ENCODE measurements at regions of chr15 and their contacts with region 1.

Region 1: DNA sequence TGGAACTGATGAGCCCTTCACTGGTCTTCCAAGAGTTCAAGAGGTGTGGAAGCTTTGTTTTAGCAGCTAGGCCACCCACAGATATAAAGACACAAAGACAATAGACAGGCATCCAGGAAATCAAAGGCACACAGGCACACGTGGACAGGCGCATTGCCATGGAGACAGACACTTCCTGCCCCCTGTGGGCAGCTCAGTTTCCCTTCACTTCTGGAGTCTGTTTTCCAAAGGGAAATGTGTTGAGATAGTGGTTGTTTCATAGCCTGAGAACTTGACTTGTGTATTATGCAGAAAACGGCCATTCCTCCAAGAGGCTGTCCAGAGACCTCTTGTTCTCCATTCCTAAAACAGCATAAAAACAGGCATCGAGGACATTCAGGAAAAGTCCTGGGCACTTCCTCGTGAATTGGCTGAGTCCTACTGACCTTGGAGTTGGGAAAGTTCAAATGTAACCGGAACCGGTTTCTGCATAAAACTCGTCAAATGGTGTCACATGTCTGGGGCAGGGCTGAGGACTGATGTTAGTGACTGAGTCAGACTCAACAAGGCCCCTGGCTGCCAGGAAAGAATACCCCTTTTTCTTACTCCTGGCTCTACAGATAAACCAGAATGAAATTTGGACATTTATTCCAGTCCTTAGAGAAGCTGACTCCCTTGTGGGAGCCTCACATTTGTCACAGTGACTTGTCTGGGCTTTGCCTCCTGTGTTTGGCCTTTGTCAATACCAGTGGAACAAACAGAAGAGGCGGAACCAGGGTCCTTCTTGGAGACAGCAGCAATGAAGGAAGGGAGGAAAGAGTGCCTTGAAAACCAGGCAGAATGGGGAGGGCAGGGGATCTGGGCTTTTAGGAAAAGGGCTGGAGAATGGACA is 1.3 kb downstream of the ALPK3 start:
- DNase-seq: peak; percentile 70 to 85
- H3K4me3 ChIP-seq: peak overlapping the region; percentile 58 to 64
- H3K27ac ChIP-seq: peak overlapping the region; percentile 99
- H3K4me1 ChIP-seq: peaks cover 0 to 81% (median 56%) of the 10 kb centered on the region in 4 donors
- H3K27me3 ChIP-seq: no peaks in the 10 kb centered on the region
- CTCF ChIP-seq: no peak

Region 2: GRCh38 chr15:84588053-84588874 is 230.2 kb before region 1 on chr15:
- intact Hi-C with region 1: loop called (anchors 10 kb)
- DNase-seq: peak; percentile 84 to 87
- H3K4me3 ChIP-seq: peak overlapping the region; percentile 36 to 39
- H3K27ac ChIP-seq: no peak overlapping the region
- H3K4me1 ChIP-seq: peaks cover 0 to 9% (median 7%) of the 10 kb centered on the region in 4 donors
- H3K27me3 ChIP-seq: no peaks in the 10 kb centered on the region
- CTCF ChIP-seq: peak; percentile 62 to 96

Region 3: GRCh38 chr15:84600851-84601838 is 217.4 kb before region 1 on chr15 and contains the start of gene ZSCAN2:
- intact Hi-C with region 1: loop called (anchors 5 kb)
- DNase-seq: peak; percentile 96 to 97
- H3K4me3 ChIP-seq: peak within 1 kb of the TSS; percentile 88 to 96
- H3K27ac ChIP-seq: peak within 1 kb of the TSS; percentile 67 to 68
- H3K4me1 ChIP-seq: peaks cover 0 to 16% (median 5%) of the 10 kb centered on the region in 4 donors
- H3K27me3 ChIP-seq: no peaks in the 10 kb centered on the region
- CTCF ChIP-seq: no peak

Region 4: GRCh38 chr15:84783496-84784251 is 34.8 kb before region 1 on chr15:
- intact Hi-C with region 1: no loop called
- DNase-seq: no peak
- H3K4me3 ChIP-seq: no peak overlapping the region
- H3K27ac ChIP-seq: no peak overlapping the region
- H3K4me1 ChIP-seq: peaks cover 0 to 45% (median 23%) of the 10 kb centered on the region in 4 donors
- H3K27me3 ChIP-seq: no peaks in the 10 kb centered on the region
- CTCF ChIP-seq: no peak

Region 5: GRCh38 chr15:85063126-85064079 is 244.9 kb after region 1 on chr15:
- intact Hi-C with region 1: no loop called
- DNase-seq: no peak
- H3K4me3 ChIP-seq: no peak overlapping the region
- H3K27ac ChIP-seq: no peak overlapping the region
- H3K4me1 ChIP-seq: no peaks in the 10 kb centered on the region
- H3K27me3 ChIP-seq: no peaks in the 10 kb centered on the region
- CTCF ChIP-seq: no peak

Measured in tibial artery (tissue), 4 donors.